Calu3 (cell line): ENCODE measurements at regions of chr3 and their contacts with region 1.

Region 1: DNA sequence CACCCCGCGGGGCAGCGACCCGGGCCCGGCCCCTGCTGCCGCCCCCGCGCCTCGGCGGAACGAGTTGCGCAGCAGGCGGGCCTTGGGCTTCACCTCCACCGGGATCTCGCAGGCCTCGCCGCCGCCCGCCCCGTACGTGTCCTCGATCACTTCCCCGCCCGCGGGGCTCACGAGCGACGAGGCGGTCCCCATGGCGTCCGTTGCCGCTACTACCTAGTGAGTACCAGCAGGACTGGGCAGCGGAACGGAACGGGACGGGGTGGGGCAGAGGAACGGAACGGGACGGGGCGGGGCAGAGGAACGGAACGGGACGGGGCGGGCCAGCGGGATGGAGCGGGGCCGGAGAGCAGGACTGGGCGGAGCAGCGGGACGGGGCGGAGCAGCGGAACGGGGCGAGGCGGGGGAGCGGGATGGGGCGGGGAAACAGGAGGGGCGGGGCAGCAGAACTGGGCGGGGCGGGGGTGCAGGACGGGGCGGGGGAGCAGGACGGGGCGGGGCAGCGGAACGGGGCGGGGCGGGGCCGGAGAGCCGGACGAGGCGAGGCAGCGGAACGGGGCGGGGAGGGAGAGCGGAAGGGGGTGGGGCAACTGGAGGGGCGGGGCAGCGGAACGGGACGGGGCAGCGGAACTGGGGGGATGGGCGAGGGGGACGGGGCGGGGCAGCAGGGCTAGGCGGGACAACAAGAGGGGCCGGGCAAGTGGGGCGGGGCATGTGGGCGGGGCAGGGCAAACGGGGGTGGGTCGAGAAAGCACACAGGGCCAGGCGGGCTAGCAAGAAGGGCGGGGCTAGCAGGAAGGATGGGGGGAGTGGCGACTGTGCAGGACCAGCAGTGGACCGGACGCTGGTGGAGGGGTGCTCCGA is at the start of gene NPHP3:
- DNase-seq: peak; percentile 99
- H3K4me3 Mint-ChIP-seq: peak within 1 kb of the TSS; percentile 84
- H3K27ac Mint-ChIP-seq: peak within 1 kb of the TSS; percentile 84
- H3K4me1 Mint-ChIP-seq: peaks cover 30% of the 10 kb centered on the region
- H3K27me3 Mint-ChIP-seq: peaks cover 9% of the 10 kb centered on the region
- CTCF ChIP-seq: no peak
- total RNA-seq, gene NPHP3: 34.4 and 40.3 TPM in 2 replicates

Region 2: GRCh38 chr3:133136114-133137046 is 414.0 kb after region 1 on chr3:
- CTCF ChIA-PET with region 1: no interaction called
- intact Hi-C with region 1: loop called (anchors 5 kb)
- DNase-seq: no peak
- H3K4me3 Mint-ChIP-seq: no peak overlapping the region
- H3K27ac Mint-ChIP-seq: no peak overlapping the region
- H3K4me1 Mint-ChIP-seq: peaks cover 13% of the 10 kb centered on the region
- H3K27me3 Mint-ChIP-seq: peaks cover 33% of the 10 kb centered on the region
- CTCF ChIP-seq: no peak